ENCODE measurements at regions of chr14 and their contacts with region 1.

Region 1: GRCh38 chr14:23120541-23121251 is 1.6 kb upstream of the CEBPE start:
- DNase-seq: peak; percentile 93
- ATAC-seq: peak; percentile 83
- H3K4me3 ChIP-seq: no peak overlapping the region
- H3K27ac ChIP-seq: no peak overlapping the region
- H3K4me1 ChIP-seq: peaks cover 22% of the 10 kb centered on the region
- H3K27me3 ChIP-seq: peaks cover 47 to 93% of the 10 kb centered on the region in 2 experiments
- CTCF ChIP-seq: peak; percentile 100
- EP300 ChIP-seq: no peak
- POLR2A ChIP-seq: no peak
- RAD21 ChIP-seq: peak; percentile 100

Region 2: GRCh38 chr14:22886500-22887259 is 234.0 kb before region 1 on chr14:
- CTCF ChIA-PET with region 1: no interaction called
- POLR2A ChIA-PET with region 1: no interaction called
- in situ Hi-C with region 1: no loop called
- intact Hi-C with region 1: no loop called
- DNase-seq: no peak
- ATAC-seq: peak; percentile 16; the same call in 2 of the 3 replicates
- H3K4me3 ChIP-seq: no peak overlapping the region
- H3K27ac ChIP-seq: no peak overlapping the region
- H3K4me1 ChIP-seq: peaks cover 15% of the 10 kb centered on the region
- H3K27me3 ChIP-seq: peaks cover 12 to 61% of the 10 kb centered on the region in 2 experiments; a peak in 4 of 5 replicates
- CTCF ChIP-seq: 0 out of 2 replicates have a peak, but pooled peaks have one; percentile 8
- EP300 ChIP-seq: no peak
- POLR2A ChIP-seq: no peak
- RAD21 ChIP-seq: no peak

Region 3: DNA sequence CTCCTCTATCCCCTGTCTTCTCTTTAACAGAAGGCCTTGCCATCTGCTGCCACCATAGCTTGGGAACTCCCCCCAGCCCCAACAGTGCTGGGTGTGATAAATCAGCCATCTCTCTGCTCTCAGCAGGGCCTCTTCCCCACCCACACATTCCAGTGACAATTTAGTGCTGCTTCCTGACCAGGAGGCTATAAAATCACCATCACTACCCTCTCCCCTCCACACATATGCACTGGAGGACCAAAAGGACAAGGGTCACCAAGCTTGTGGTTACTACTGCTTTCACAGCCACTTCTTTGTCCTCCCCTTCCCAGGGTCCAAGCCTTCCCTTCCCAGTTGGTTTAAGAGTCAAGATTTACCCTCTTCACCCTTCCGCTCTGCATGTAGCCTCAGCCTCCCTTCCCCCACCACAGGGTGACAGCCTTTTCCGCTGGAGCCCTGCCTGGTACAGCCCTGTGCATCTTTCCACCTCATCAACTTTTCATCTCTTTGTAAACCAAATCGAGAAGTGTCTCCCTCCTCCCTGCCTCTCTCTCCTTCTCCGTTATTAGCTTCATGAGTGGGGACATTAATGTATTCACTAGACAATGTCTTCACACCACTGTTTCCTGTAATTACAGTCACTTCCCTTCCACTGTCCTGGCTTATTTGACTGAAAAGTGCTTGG is 95.4 kb before region 1 on chr14:
- CTCF ChIA-PET with region 1: no interaction called
- POLR2A ChIA-PET with region 1: no interaction called
- in situ Hi-C with region 1: no loop called
- intact Hi-C with region 1: no loop called
- DNase-seq: no peak
- ATAC-seq: peak; percentile 11
- H3K4me3 ChIP-seq: no peak overlapping the region
- H3K27ac ChIP-seq: no peak overlapping the region
- H3K4me1 ChIP-seq: peaks cover 29% of the 10 kb centered on the region
- H3K27me3 ChIP-seq: no peaks in the 10 kb centered on the region
- CTCF ChIP-seq: no peak
- EP300 ChIP-seq: no peak
- POLR2A ChIP-seq: peak; percentile 52 to 61
- RAD21 ChIP-seq: no peak; the same call in 1 of the 2 replicates

Region 4: DNA sequence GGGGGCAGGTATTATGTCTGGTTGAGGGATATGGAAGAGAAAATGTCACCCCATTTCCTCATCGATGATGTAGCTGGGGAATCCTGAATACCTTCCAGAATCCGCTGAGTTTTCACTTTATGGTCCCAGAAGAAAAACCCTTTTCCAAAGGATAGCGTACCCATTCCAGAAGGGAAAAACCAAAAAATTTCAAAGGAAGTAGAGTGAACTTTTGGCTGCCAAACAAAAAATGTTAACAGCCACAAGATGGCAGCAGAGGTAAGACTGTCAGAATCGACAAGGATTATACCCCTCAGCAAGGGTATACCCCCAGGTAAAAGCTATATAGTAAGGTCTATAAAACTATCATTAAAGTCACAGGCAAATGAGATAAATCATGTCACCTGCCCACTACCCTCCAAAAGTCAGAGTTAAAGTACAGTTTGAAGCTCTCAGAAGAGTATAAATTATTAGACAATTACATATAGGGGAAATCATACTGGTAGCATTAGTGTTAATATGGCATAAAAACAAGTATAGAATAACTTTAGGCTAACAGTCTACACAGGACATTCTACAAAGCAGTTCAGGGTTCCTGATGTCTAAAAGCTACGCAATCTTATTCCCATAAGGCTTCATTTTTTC is 43.8 kb before region 1 on chr14:
- CTCF ChIA-PET with region 1: interaction called, 12 read pairs
- POLR2A ChIA-PET with region 1: interaction called, 3 read pairs
- in situ Hi-C with region 1: no loop called
- intact Hi-C with region 1: no loop called
- DNase-seq: peak; percentile 68
- ATAC-seq: peak; percentile 57
- H3K4me3 ChIP-seq: no peak overlapping the region
- H3K27ac ChIP-seq: no peak overlapping the region
- H3K4me1 ChIP-seq: peaks cover 9% of the 10 kb centered on the region
- H3K27me3 ChIP-seq: no peaks in the 10 kb centered on the region
- CTCF ChIP-seq: peak; percentile 70
- EP300 ChIP-seq: no peak
- POLR2A ChIP-seq: no peak
- RAD21 ChIP-seq: no peak

Region 5: DNA sequence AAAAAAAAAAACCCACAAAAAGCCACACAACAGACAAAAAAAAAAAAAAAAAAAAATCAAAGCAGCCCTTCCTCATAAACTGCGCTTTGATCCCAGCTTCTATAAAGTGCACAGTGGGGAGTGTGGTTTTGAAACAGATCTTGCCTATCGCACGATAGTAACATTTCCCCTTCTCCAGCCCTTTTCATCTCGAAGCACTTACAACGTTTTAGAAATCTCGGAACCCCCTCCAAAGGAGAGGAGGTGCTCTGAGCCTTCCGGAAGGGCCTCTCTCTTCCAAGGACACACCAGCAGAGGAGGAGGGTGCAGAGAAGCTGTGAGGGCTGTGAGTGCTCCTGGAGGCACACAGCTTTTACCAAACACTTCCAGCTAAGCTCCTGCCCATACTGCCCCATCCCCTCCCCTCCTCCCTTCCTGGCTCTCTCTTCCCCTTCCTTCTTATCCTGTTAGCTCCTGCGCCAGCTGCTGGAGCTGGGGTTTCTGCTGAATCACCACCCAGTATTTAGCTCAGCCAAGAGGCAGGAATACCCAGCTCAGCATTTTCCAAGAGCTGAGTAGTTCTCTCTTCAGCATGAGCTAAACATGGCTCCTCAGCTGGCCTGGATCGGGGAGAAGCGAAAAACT is 34.4 kb after region 1 on chr14:
- CTCF ChIA-PET with region 1: no interaction called
- POLR2A ChIA-PET with region 1: no interaction called
- in situ Hi-C with region 1: no loop called
- intact Hi-C with region 1: no loop called
- DNase-seq: no peak
- ATAC-seq: peak; percentile 6; the same call in 1 of the 3 replicates
- H3K4me3 ChIP-seq: no peak overlapping the region
- H3K27ac ChIP-seq: no peak overlapping the region
- H3K4me1 ChIP-seq: no peaks in the 10 kb centered on the region
- H3K27me3 ChIP-seq: peaks cover 12 to 71% of the 10 kb centered on the region in 2 experiments
- CTCF ChIP-seq: no peak
- EP300 ChIP-seq: no peak
- POLR2A ChIP-seq: no peak
- RAD21 ChIP-seq: no peak

Region 6: GRCh38 chr14:23186913-23187654 is 66.4 kb after region 1 on chr14:
- CTCF ChIA-PET with region 1: interaction called, 493 read pairs
- POLR2A ChIA-PET with region 1: no interaction called
- in situ Hi-C with region 1: loop called (anchors 5 kb)
- intact Hi-C with region 1: loop called (anchors 1 kb)
- DNase-seq: peak; percentile 78
- ATAC-seq: peak; percentile 89
- H3K4me3 ChIP-seq: no peak overlapping the region
- H3K27ac ChIP-seq: no peak overlapping the region
- H3K4me1 ChIP-seq: peaks cover 12% of the 10 kb centered on the region
- H3K27me3 ChIP-seq: peaks cover 2 to 34% of the 10 kb centered on the region in 2 experiments
- CTCF ChIP-seq: peak; percentile 94
- EP300 ChIP-seq: no peak
- POLR2A ChIP-seq: no peak
- RAD21 ChIP-seq: peak; percentile 93

Region 7: GRCh38 chr14:23294734-23295561 is 174.3 kb after region 1 on chr14:
- CTCF ChIA-PET with region 1: interaction called, 12 read pairs
- POLR2A ChIA-PET with region 1: no interaction called
- in situ Hi-C with region 1: no loop called
- intact Hi-C with region 1: loop called (anchors 5 kb)
- DNase-seq: peak; percentile 77
- ATAC-seq: peak; percentile 75
- H3K4me3 ChIP-seq: no peak overlapping the region
- H3K27ac ChIP-seq: no peak overlapping the region
- H3K4me1 ChIP-seq: peaks cover 24% of the 10 kb centered on the region
- H3K27me3 ChIP-seq: no peaks in the 10 kb centered on the region
- CTCF ChIP-seq: peak; percentile 94
- EP300 ChIP-seq: peak; percentile 20 to 38; a peak in 1 of 4 replicates
- POLR2A ChIP-seq: peak in 1 of 2 experiments; percentile 34; a peak in 1 of 4 replicates
- RAD21 ChIP-seq: 0 out of 2 replicates have a peak, but pooled peaks have one; percentile 33

Region 8: DNA sequence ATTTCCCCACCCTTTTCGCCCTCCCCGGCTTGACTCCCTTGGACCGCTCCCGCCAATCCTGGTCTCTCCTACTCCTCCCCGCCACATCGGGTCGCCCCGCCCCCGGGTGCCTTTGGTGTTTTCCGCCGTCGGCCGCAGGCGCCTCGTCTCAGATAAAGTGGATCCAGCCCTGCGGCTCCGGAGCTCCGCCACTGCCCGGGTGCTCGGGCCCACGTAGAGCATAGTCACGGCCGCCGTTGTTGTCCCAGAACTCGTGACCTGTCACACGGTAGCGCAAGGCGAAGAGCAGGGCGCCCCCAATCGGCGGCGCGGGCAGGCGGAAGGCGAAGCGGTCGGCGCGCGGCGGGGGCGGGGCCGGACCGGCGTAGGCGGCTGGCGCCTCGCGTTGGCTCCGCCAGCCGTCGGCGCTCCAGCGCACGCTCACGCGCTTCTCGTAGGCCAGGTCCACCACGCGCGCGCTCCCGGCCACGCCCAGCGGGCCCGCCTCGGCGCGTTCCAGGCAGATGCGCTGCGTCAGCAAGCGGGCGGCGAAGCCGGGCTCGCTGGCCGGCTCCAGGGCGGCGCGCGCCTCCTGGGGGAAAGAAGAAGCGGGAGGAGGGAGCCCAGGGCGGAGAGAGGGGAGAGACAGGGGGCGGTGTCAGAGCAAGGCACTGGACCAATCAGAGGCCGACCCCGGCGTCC is 180.7 kb after region 1 on chr14:
- CTCF ChIA-PET with region 1: interaction called, 12 read pairs
- POLR2A ChIA-PET with region 1: interaction called, 3 read pairs
- in situ Hi-C with region 1: no loop called
- intact Hi-C with region 1: loop called (anchors 5 kb)
- DNase-seq: peak; percentile 100
- ATAC-seq: peak; percentile 87
- H3K4me3 ChIP-seq: peak overlapping the region; percentile 67 to 88 (median 75)
- H3K27ac ChIP-seq: peak overlapping the region; percentile 91
- H3K4me1 ChIP-seq: peaks cover 57% of the 10 kb centered on the region
- H3K27me3 ChIP-seq: no peaks in the 10 kb centered on the region; a peak in 1 of 5 replicates
- CTCF ChIP-seq: peak; percentile 92
- EP300 ChIP-seq: peak in 1 of 2 experiments; percentile 54; a peak in 2 of 4 replicates
- POLR2A ChIP-seq: no peak
- RAD21 ChIP-seq: peak; percentile 87

Region 9: DNA sequence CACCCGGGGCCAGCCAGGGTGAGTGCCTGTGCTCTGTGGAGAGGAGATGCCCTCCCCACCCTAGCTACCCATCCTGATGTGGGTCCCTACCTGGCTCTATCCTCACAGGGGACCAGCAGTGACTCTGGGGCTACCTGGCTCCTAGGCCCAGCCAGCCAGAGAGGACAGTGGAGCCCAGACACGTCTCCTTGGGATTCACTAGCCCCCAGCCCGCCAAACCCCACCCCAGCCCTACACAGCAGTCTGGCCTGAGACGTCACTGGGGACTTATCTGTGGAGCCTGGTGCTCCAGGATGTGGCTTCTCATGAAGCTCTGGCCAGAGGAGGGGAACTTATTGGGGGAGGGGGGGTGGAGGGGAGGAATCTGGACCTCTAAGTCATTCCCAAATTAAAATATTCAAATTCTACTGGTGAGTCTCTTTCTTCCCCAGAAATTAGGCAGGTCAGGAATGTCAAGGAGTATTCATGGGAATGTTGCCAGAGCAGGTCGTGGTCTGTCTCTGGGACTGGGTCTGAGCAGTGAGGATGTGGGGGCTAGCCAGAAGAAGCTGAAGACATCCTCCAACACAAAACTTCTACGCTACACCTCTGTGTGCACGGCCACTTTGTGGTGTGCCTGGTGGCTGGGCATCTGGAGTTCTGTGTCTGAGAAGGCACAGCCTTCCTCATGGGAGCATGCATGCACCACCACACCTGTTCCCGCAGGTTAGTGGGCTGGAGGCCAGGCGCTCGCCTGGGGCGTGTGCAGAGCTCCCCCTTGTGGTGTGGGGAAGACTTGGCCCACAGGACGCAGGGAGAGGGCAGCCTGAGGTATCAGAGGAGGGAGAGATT is 258.9 kb after region 1 on chr14:
- CTCF ChIA-PET with region 1: interaction called, 13 read pairs
- POLR2A ChIA-PET with region 1: no interaction called
- in situ Hi-C with region 1: no loop called
- intact Hi-C with region 1: loop called (anchors 5 kb)
- DNase-seq: peak; percentile 66
- ATAC-seq: peak; percentile 88
- H3K4me3 ChIP-seq: no peak overlapping the region
- H3K27ac ChIP-seq: no peak overlapping the region
- H3K4me1 ChIP-seq: no peaks in the 10 kb centered on the region
- H3K27me3 ChIP-seq: peaks cover 26 to 90% of the 10 kb centered on the region in 2 experiments
- CTCF ChIP-seq: peak; percentile 100
- EP300 ChIP-seq: no peak
- POLR2A ChIP-seq: no peak
- RAD21 ChIP-seq: peak; percentile 98

Measured in HepG2 (cell line).